ENCODE measurements at regions of chr9 and their contacts with region 1.

Region 1: GRCh38 chr9:81848472-81848871 is 79.8 kb upstream of the SPATA31D4 start:
- DNase-seq: no peak
- H3K4me3 ChIP-seq: no peak overlapping the region
- H3K27ac ChIP-seq: no peak overlapping the region
- H3K4me1 ChIP-seq: no peaks in the 10 kb centered on the region
- H3K27me3 ChIP-seq: no peaks in the 10 kb centered on the region
- CTCF ChIP-seq: peak in 3 of 4 experiments; percentile 29 to 43 (median 40)
- POLR2A ChIP-seq: no peak

Region 2: GRCh38 chr9:80605129-80605528 is 1243.3 kb before region 1 on chr9:
- intact Hi-C with region 1: loop called (anchors 10 kb)
- DNase-seq: no peak
- H3K4me3 ChIP-seq: no peak overlapping the region
- H3K27ac ChIP-seq: no peak overlapping the region
- H3K4me1 ChIP-seq: no peaks in the 10 kb centered on the region
- H3K27me3 ChIP-seq: no peaks in the 10 kb centered on the region
- CTCF ChIP-seq: peak in 3 of 4 experiments; percentile 25 to 34 (median 31)
- POLR2A ChIP-seq: no peak

Region 3: GRCh38 chr9:81521892-81522291 is 326.6 kb before region 1 on chr9:
- intact Hi-C with region 1: loop called (anchors 5 kb)
- DNase-seq: no peak
- H3K4me3 ChIP-seq: no peak overlapping the region
- H3K27ac ChIP-seq: no peak overlapping the region
- H3K4me1 ChIP-seq: no peaks in the 10 kb centered on the region
- H3K27me3 ChIP-seq: no peaks in the 10 kb centered on the region
- CTCF ChIP-seq: no peak
- POLR2A ChIP-seq: no peak

Region 4: DNA sequence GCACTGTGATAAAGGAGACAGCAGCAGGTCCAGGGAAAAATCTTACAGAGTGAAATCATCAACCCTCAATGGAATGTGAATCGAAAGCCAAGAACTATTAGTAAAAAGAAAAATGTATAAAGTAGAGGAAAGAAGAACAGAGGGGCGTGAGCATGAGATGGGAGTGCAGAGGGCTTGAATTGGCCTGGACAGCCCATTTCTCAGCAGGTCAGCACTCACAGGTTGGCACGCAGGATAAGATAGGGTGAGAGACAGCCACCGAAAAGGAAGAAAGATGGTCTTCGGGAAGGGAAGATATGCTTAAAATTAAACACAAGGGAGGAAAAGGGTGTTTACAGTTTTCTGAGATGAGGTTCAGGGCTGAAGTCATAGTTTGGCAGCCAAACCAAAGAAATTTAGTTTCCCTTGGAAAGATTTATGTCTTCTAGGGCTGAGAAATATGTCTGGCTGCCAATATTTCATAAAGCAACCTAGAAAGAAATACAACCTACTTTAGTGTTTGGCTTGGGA is 664.8 kb after region 1 on chr9:
- intact Hi-C with region 1: loop called (anchors 10 kb)
- DNase-seq: no peak
- H3K4me3 ChIP-seq: no peak overlapping the region
- H3K27ac ChIP-seq: no peak overlapping the region
- H3K4me1 ChIP-seq: no peaks in the 10 kb centered on the region
- H3K27me3 ChIP-seq: no peaks in the 10 kb centered on the region
- CTCF ChIP-seq: no peak
- POLR2A ChIP-seq: no peak